Panc1 (cell line): ENCODE measurements at regions of chrX and their contacts with region 1.

Region 1: DNA sequence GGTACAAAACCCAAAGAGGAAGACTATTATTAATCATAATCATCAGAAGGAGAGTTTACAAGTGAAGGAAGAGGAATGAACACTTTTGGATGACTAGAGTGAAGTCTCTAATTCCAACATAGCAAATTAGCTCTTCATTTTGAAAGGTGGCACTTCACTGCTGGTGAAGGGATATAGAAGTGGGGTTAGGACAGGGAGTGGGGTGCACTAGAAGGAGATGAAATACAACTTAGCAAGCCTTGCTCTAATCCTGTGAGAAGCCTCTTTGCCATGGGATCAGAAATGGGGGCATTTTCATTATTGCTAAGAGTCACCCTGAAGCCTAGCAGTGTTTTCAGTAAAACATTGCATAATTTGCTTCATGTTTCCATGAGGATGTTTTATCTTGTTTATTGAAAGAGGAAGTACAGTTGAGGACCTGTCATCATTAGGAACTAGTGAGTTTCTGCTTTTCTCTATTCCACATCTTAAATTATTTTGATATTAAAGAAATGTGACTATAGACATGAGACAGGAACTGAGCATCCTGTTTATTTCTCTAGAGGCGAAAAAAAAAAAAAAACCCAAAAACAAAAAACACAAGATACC is 9.3 kb upstream of the GRPR start:
- DNase-seq: no peak
- ATAC-seq: no peak
- H3K4me3 ChIP-seq: no peak overlapping the region
- H3K27ac ChIP-seq: no peak overlapping the region
- H3K4me1 ChIP-seq: no peaks in the 10 kb centered on the region
- H3K27me3 ChIP-seq: no peaks in the 10 kb centered on the region
- CTCF ChIP-seq: no peak

Region 2: GRCh38 chrX:15804563-15804962 is 309.5 kb before region 1 on chrX:
- CTCF ChIA-PET with region 1: no interaction called
- POLR2A ChIA-PET with region 1: interaction called, 11 read pairs
- in situ Hi-C with region 1: no loop called
- intact Hi-C with region 1: no loop called
- DNase-seq: no peak
- ATAC-seq: no peak
- H3K4me3 ChIP-seq: no peak overlapping the region
- H3K27ac ChIP-seq: no peak overlapping the region
- H3K4me1 ChIP-seq: no peaks in the 10 kb centered on the region
- H3K27me3 ChIP-seq: no peaks in the 10 kb centered on the region
- CTCF ChIP-seq: no peak

Region 3: GRCh38 chrX:16023790-16024734 is 90.0 kb before region 1 on chrX:
- CTCF ChIA-PET with region 1: no interaction called
- POLR2A ChIA-PET with region 1: no interaction called
- in situ Hi-C with region 1: no loop called
- intact Hi-C with region 1: no loop called
- DNase-seq: no peak
- ATAC-seq: no peak
- H3K4me3 ChIP-seq: no peak overlapping the region
- H3K27ac ChIP-seq: no peak overlapping the region
- H3K4me1 ChIP-seq: no peaks in the 10 kb centered on the region
- H3K27me3 ChIP-seq: no peaks in the 10 kb centered on the region
- CTCF ChIP-seq: no peak

Region 4: DNA sequence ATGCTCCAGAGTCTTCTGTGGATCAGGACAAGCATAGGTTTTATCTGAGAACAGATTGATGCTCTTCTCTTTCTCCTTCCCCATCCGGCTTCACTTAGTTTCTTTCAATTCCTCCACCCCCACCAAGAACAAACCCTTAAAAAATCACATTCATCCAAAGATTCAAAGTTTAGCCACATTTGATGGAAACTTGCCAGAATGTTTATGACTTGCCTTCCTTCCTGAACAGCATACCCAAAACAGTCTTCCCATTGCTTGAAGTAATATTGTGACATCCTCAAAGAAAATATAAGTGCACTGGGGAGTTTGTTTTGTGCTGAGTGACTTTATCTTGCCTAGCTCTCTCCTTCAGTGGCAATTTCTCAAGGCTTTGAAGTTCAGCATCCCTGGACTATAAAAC is 136.2 kb after region 1 on chrX:
- CTCF ChIA-PET with region 1: no interaction called
- POLR2A ChIA-PET with region 1: no interaction called
- in situ Hi-C with region 1: no loop called
- intact Hi-C with region 1: no loop called
- DNase-seq: no peak
- ATAC-seq: no peak
- H3K4me3 ChIP-seq: no peak overlapping the region
- H3K27ac ChIP-seq: no peak overlapping the region
- H3K4me1 ChIP-seq: no peaks in the 10 kb centered on the region
- H3K27me3 ChIP-seq: no peaks in the 10 kb centered on the region
- CTCF ChIP-seq: no peak

Region 5: DNA sequence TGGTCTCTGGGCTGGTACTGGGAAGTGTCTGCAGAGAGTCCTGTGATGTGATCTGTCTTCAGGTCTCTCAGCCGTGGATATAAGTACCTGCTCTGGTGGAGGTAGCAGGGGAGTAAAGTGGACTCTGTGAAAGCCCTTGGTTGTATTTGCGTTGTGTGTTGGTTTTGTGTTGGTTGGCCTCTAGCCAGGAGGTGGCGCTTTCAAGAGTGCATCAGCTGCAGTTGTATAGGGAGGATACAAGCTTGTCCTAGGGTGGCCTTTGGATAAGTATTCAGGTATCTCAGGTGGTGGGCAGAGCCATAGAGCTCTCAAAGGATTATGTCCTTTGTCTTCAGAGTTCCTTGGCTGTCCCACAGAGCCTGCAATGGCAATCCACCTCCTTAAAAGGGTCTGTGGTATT is 164.9 kb after region 1 on chrX:
- CTCF ChIA-PET with region 1: no interaction called
- POLR2A ChIA-PET with region 1: no interaction called
- in situ Hi-C with region 1: no loop called
- intact Hi-C with region 1: no loop called
- DNase-seq: no peak
- ATAC-seq: no peak
- H3K4me3 ChIP-seq: no peak overlapping the region
- H3K27ac ChIP-seq: no peak overlapping the region
- H3K4me1 ChIP-seq: no peaks in the 10 kb centered on the region
- H3K27me3 ChIP-seq: no peaks in the 10 kb centered on the region
- CTCF ChIP-seq: no peak